Transverse colon (tissue), 4 donors: ENCODE measurements at regions of chr1 and their contacts with region 1.

Region 1: GRCh38 chr1:200351826-200352549 is 57.8 kb downstream of the ZNF281 start:
- DNase-seq: no peak
- H3K4me3 ChIP-seq: peak overlapping the region in 1 of 4 donors; percentile 23
- H3K27ac ChIP-seq: no peak overlapping the region
- H3K4me1 ChIP-seq: peaks cover 0 to 14% (median 5%) of the 10 kb centered on the region in 4 donors
- H3K27me3 ChIP-seq: no peaks in the 10 kb centered on the region
- CTCF ChIP-seq: no peak
- EP300 ChIP-seq: no peak
- POLR2A ChIP-seq: no peak

Region 2: GRCh38 chr1:199794105-199794863 is 557.7 kb before region 1 on chr1:
- in situ Hi-C with region 1: no loop called
- intact Hi-C with region 1: loop called (anchors 10 kb)
- DNase-seq: no peak
- H3K4me3 ChIP-seq: no peak overlapping the region
- H3K27ac ChIP-seq: no peak overlapping the region
- H3K4me1 ChIP-seq: no peaks in the 10 kb centered on the region
- H3K27me3 ChIP-seq: no peaks in the 10 kb centered on the region
- CTCF ChIP-seq: no peak
- EP300 ChIP-seq: no peak
- POLR2A ChIP-seq: no peak